PC-9 (cell line): ENCODE measurements at regions of chr3 and their contacts with region 1.

Region 1: DNA sequence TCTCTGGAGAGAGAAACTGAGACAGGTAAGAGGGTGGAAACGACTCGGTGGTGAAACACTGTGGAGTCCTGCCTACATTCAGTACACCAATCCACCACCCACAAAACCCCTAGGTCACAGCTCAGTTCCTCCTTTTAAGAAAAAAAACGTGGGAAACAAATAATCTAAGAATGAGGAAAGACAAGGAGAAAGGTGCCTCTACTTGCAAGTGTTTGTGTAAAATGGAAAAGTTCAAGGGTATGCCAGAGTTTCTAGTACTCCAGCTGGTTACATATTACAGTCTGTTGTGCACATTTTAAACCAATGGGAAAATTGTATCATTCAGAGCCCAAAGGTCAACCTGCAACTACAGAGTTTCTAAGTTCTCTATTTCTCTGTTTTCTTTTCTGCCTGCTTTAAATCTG is 32.2 kb downstream of the HGD start:
- DNase-seq: no peak
- H3K4me3 ChIP-seq: no peak overlapping the region
- H3K27ac ChIP-seq: no peak overlapping the region
- H3K4me1 ChIP-seq: no peaks in the 10 kb centered on the region
- H3K27me3 ChIP-seq: no peaks in the 10 kb centered on the region
- CTCF ChIP-seq: no peak

Region 2: GRCh38 chr3:120661118-120661935 is 11.5 kb after region 1 on chr3:
- CTCF ChIA-PET with region 1: no interaction called
- POLR2A ChIA-PET with region 1: interaction called, 11 read pairs
- intact Hi-C with region 1: no loop called
- DNase-seq: no peak
- H3K4me3 ChIP-seq: no peak overlapping the region
- H3K27ac ChIP-seq: no peak overlapping the region
- H3K4me1 ChIP-seq: peaks cover 7% of the 10 kb centered on the region; the same call in 1 of the 2 replicates
- H3K27me3 ChIP-seq: no peaks in the 10 kb centered on the region
- CTCF ChIP-seq: no peak

Region 3: GRCh38 chr3:121232309-121233225 is 582.7 kb after region 1 on chr3:
- CTCF ChIA-PET with region 1: no interaction called
- POLR2A ChIA-PET with region 1: no interaction called
- intact Hi-C with region 1: no loop called
- DNase-seq: no peak
- H3K4me3 ChIP-seq: no peak overlapping the region
- H3K27ac ChIP-seq: no peak overlapping the region
- H3K4me1 ChIP-seq: no peaks in the 10 kb centered on the region
- H3K27me3 ChIP-seq: no peaks in the 10 kb centered on the region
- CTCF ChIP-seq: no peak